Dorsolateral prefrontal cortex (tissue), 120 donors: ENCODE measurements at regions of chr15 and their contacts with region 1.

Region 1: GRCh38 chr15:56918046-56918938 is at the start of gene TCF12:
- DNase-seq: peak; percentile 76 to 94 (median 87)
- H3K4me3 ChIP-seq: peak within 1 kb of the TSS; percentile 71 to 98 (median 87)
- H3K27ac ChIP-seq: peak within 1 kb of the TSS; percentile 83 to 99 (median 97)
- H3K27me3 ChIP-seq: no peaks in the 10 kb centered on the region
- CTCF ChIP-seq: peak in 53 of 56 donors; percentile 29 to 77 (median 56)
- total RNA-seq, gene TCF12: 63.4 to 217 (median 109) TPM

Region 2: DNA sequence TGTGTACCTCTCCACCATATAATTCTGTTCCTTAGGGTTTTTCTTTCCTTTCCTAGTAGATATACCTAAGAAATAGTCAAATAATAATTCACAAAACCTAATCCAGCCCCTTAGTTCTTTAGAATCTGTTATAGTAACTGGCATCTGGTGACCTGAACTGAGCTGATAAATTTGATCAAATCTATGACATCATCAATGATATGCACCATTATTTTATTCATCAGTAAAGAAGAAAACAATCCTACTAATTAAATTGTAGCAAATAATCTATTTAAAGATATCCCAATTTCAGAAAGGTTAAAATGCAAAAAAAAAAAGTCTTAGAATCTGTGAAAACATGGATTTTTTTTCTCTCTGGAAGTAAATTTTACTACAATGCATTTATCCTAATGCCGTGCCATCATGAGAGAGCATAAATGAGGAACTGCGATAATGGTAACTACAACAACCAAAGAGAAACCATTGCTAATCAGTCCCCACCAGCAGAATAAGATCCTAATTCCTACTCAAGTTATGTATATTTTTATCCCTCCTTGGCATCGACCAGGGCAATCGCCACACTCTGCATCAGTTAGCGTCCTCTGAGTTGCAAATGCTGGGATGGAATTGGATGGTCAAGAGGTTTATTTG is 446.7 kb before region 1 on chr15:
- intact Hi-C with region 1: no loop called
- DNase-seq: no peak
- H3K4me3 ChIP-seq: no peak overlapping the region
- H3K27ac ChIP-seq: no peak overlapping the region
- H3K27me3 ChIP-seq: peaks cover 0 to 4% (median 0%) of the 10 kb centered on the region in 45 donors
- CTCF ChIP-seq: no peak

Region 3: DNA sequence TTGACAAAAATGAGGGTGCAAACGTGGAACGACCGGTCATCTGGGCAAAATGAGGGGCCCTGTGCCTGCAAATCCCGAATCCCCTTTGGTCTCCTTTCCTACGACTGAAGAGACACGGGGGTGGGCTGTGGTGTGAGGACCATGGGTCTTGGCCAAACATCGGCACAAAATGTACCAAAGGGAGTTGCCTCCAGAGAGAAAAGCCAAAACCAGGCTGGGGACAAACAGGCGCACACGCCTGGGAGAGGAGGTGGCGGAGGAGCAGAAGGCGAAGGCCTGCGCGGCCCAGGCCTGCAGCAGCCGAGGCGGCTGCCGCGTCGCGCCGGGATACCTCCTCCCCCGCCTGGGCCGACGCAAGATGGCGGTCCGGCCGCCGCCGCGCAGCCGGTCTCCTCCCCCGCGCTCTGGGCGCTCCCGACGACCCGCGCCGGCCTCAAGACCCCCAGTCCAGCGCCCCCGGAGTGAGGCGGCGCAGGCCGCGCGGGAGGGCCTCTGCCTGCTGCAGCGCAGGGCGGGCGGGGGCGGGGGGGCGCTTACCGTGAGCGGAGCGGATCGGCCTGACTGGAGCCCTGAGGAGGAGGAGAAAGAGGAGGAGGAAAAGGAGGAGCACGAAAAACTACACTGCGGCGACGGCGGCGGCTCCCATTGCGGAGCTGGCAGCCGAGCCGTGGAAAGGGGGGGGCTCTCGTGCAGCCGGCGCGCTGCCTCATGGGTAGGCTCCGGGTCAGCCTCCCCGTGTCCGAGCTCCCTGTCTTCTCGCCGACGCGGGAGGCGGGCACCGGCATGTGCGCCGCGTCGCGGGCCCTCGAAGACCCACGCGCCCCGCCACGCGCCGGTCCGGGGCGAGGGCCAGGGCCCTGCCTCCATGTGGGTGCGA is 185.1 kb before region 1 on chr15 and contains the start of gene ZNF280D:
- intact Hi-C with region 1: loop called (anchors 1 to 10 kb)
- DNase-seq: peak; percentile 81 to 90 (median 86)
- H3K4me3 ChIP-seq: peak within 1 kb of the TSS; percentile 54 to 84 (median 73)
- H3K27ac ChIP-seq: peak within 1 kb of the TSS; percentile 85 to 100 (median 98)
- H3K27me3 ChIP-seq: no peaks in the 10 kb centered on the region
- CTCF ChIP-seq: peak in 20 of 56 donors; percentile 7 to 58 (median 27)
- total RNA-seq, gene ZNF280D: 44.4 to 121 (median 75.2) TPM

Region 4: DNA sequence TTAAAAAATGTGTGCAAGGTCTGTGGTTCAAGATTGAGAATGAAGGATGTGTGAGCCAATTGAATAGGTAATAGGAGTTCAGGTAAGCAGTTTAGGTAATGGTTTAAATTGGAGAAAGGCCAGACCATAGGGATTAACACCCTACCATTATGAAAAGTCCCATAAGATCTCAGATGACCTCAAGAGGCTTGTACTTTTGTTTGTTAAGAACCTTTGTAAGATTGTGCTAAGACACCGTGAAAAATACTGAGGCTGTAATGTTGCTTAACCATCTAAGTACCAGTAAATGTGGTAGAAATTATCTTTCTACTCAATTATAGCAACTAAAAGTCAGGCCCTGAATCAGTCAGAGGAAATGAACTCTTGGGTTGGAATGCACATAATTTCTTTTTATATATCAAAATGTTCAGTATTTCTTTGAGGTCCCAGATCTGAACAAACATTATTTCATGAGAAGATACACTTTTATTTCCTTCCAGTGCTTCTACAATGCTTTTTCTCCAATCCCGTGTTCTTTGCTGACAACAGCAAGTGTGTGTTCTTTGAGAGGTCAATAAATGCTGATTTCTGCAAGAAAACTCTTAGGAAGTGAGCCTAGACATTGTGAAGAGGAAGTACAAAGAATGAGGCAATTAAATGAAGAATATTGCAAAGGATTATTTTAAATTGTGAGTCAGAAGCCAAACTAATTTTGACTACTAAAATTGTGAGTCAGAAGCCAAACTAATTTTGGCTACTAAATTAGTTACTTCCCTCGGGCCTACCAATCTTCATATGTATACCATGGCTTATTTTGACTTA is 66.6 kb after region 1 on chr15:
- intact Hi-C with region 1: loop called in 1 of 2 experiments (anchors 10 kb)
- DNase-seq: no peak
- H3K4me3 ChIP-seq: no peak overlapping the region
- H3K27ac ChIP-seq: peak overlapping the region in 50 of 59 donors; percentile 1 to 74 (median 46)
- H3K27me3 ChIP-seq: no peaks in the 10 kb centered on the region
- CTCF ChIP-seq: no peak

Region 5: DNA sequence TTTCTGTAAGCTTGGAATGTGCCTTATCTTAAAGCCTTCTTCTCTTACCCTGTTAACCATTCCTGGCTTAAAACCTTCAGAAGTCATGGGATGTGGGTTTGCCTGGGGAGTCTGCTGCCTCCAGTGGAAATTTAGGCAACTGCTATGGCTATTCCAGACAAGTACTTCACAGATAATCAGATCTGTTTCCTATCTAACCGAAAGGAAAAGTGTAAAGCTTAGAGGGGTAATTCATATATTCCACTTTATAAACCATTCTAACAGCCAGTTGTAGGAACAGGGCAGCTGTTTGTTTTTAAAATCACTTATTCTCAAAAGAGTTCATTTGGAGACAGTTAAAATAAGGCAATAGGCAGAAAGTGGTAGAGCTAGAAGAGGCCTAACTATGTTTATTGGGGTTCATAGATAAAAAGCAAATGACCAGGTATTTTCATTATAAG is 220.1 kb after region 1 on chr15:
- intact Hi-C with region 1: loop called (anchors 10 kb)
- DNase-seq: peak in 1 of 10 donors; percentile 44
- H3K4me3 ChIP-seq: no peak overlapping the region
- H3K27ac ChIP-seq: peak overlapping the region in 33 of 59 donors; percentile 1 to 63 (median 34)
- H3K27me3 ChIP-seq: no peaks in the 10 kb centered on the region
- CTCF ChIP-seq: peak; percentile 49 to 89 (median 74)

Region 6: GRCh38 chr15:57213862-57214261 is 295.6 kb after region 1 on chr15:
- intact Hi-C with region 1: loop called (anchors 5 to 10 kb)
- DNase-seq: no peak
- H3K4me3 ChIP-seq: peak overlapping the region in 12 of 59 donors; percentile 4 to 34 (median 18)
- H3K27ac ChIP-seq: peak overlapping the region in 38 of 59 donors; percentile 5 to 70 (median 38)
- H3K27me3 ChIP-seq: no peaks in the 10 kb centered on the region
- CTCF ChIP-seq: peak; percentile 22 to 80 (median 63)